ENCODE measurements at regions of chr7 and their contacts with region 1.

Region 1: GRCh38 chr7:132328047-132328620 is 248.1 kb downstream of the PLXNA4 start:
- DNase-seq: peak; percentile 48
- ATAC-seq: peak; percentile 72 to 79

Region 2: DNA sequence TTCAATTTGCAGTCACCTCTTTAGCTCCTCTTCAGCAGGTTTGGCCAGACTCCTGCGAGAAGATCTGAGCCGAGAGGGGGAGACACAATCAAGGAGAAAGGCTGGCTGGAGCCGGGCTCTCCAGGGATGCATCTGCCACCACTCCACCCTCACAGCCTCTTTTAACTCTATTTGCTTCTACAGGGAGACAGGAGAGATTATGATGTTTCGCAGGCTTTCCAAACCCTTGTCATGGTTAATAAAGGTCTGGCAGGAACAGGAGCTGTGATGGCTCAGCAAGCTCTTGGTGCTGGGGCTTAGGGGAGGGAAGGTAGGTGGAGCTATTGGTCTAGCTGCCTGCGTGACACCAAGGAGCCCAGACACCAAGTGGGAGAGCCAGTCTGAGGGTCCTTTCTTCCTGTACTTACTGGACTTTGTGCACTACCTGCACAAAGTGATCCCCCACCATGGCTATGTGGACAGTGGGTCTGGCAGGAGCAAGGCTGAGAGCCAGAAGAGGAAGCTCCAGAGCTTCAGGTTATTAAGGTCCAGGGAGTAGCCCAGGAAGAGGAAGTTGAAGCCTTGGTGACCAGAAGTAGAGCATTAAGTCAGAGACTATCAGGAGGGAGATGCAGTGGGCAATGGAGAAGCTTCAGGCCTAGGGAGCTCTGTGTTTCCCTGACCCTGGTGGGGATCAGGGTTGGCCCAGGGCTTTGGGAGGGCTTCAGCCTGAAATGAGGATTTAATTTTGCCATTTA is 323.4 kb before region 1 on chr7:
- intact Hi-C with region 1: no loop called
- DNase-seq: peak; percentile 32
- ATAC-seq: peak; percentile 83 to 93

Region 3: DNA sequence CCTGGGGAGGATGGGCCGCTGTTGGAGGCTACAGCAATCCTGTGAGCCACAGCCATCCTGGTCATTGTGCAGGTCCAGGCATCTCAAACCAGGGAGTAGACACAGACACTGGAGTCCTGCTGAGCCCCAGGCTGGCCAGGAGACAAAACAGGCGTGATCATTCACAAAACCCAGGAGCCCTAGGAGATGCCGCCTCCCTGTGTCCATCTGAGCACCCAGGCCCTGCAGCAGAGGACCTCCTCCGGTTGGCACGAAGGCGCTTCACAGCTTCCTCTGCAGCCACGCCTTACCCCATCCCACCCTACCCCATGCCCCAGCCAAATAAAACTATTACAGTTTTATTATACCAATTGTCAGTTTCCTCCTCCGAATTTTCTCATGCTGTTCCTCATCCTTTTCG is 64.6 kb after region 1 on chr7:
- intact Hi-C with region 1: no loop called
- DNase-seq: no peak
- ATAC-seq: no peak

Region 4: GRCh38 chr7:132402751-132403245 is 74.7 kb after region 1 on chr7:
- intact Hi-C with region 1: loop called in 1 of 2 experiments (anchors 5 kb)
- DNase-seq: peak; percentile 73
- ATAC-seq: peak; percentile 75 to 92

Region 5: DNA sequence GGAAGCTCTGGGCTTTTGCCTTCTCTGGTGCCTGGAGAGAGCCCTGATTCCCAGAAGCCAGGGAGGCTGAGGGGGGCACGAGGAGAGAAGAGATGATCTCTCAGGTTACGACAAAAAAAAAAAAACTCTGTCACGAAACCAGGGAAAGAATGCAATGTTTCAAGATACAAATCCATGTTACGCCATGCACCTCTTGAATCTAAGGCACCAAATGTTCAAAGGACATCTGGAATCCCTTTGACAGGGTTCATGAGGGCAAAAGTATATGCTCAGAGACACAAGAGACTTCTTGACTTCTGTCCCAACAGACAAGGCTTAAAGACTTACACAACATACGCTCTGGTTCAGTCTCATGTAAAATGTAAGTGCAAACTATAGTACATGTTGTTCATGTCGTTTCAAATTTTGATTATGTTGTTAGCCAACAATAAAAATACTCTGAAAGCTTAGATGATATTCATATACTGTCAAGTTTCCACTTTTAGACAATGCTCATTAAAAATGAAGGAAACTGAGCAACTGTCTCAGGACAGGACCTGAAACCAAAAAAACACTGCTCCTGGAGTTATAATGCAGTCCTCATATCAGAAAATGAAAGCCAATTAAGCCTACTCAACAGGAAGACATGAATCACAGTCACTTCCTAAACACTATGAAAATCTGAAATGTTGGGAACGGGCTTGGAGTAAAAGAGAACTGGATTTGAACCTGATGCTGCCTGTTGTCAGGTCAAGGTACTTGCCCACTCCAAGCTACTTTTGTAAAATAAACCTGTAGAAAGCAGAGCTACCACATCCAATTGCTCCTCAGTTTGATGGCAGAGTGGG is 681.5 kb after region 1 on chr7:
- intact Hi-C with region 1: no loop called
- DNase-seq: no peak
- ATAC-seq: no peak

Measured in left cardiac atrium (tissue), 4 donors.